CD8-positive, alpha-beta T cell (primary cell): ENCODE measurements at regions of chr14 and their contacts with region 1.

Region 1: DNA sequence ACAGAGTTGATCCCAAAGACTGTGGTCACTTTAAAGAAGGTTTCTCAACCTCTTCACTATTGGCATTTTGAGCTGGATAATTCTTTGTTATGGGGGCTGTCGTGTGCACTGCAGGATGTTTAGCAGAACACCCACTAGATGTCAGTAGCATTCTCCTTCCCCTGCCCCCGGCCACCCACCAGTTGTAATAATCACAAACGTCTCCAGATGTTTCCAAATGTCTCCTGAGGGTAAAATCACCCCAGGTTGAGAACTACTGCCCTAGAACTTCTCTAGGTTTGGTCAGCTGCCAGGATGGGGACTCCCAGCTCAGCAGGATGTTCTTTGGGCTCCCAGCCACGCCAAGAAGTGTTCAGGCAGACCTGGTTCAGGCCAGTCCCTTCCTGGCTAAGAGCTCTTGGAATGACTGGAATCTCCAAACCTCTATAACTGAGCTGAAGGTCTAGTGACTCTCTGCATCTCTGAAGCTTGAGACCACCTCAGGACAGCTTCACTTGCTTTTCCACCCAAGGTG is 12.5 kb upstream of the AJUBA start:
- DNase-seq: peak in 7 of 9 experiments; percentile 13 to 63 (median 46)
- ATAC-seq: peak; percentile 85
- H3K4me3 ChIP-seq: no peak overlapping the region
- H3K4me3 Mint-ChIP-seq: no peak overlapping the region
- H3K27ac ChIP-seq: no peak overlapping the region
- H3K27ac Mint-ChIP-seq: no peak overlapping the region
- H3K4me1 ChIP-seq: peaks cover 3% of the 10 kb centered on the region
- H3K4me1 Mint-ChIP-seq: peaks cover 5% of the 10 kb centered on the region
- H3K27me3 ChIP-seq: no peaks in the 10 kb centered on the region
- H3K27me3 Mint-ChIP-seq: no peaks in the 10 kb centered on the region
- CTCF ChIP-seq: peak; percentile 46

Region 2: GRCh38 chr14:22973217-22974032 is 21.4 kb before region 1 on chr14:
- CTCF ChIA-PET with region 1: interaction called, 207 read pairs
- POLR2A ChIA-PET with region 1: no interaction called
- intact Hi-C with region 1: no loop called
- DNase-seq: peak in 7 of 9 experiments; percentile 30 to 70 (median 45)
- ATAC-seq: peak; percentile 52
- H3K4me3 ChIP-seq: no peak overlapping the region
- H3K4me3 Mint-ChIP-seq: no peak overlapping the region
- H3K27ac ChIP-seq: no peak overlapping the region
- H3K27ac Mint-ChIP-seq: no peak overlapping the region
- H3K4me1 ChIP-seq: no peaks in the 10 kb centered on the region
- H3K4me1 Mint-ChIP-seq: no peaks in the 10 kb centered on the region
- H3K27me3 ChIP-seq: no peaks in the 10 kb centered on the region
- H3K27me3 Mint-ChIP-seq: peaks cover 2% of the 10 kb centered on the region
- CTCF ChIP-seq: peak; percentile 64

Region 3: DNA sequence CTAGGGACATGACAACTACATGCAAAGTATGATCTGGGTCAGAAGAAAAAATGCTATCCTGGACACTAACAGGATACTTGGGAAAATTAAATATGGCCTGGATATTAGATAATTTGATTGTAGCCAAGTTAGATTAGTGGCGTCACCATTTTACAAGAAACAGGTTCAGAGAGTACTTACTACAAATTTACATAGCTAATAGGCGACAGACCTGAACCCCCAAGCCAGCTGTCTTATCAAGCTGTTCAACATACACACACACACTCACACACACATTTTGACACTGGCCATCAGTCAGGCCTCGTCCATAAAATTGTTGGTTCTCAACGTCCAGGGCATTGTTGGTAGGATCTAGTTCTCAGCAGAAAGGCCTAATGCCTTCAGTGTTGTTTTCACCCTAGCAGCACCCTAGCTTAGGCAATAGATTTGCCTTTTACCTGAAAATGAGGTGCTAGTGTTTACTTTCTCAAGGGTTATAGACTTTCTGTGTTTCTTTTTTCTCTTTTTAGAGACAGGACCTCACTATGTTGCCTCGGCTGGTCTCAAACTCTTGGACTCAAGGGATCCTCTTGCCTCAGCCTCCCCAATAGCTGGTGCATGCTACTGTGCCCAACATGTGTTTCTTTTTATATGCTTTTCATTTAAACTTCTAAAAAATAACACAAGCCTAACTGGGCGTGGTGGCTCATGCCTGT is 18.4 kb after region 1 on chr14:
- CTCF ChIA-PET with region 1: interaction called, 59 read pairs
- POLR2A ChIA-PET with region 1: interaction called, 3 read pairs
- intact Hi-C with region 1: no loop called
- DNase-seq: no peak
- ATAC-seq: no peak
- H3K4me3 ChIP-seq: no peak overlapping the region
- H3K4me3 Mint-ChIP-seq: no peak overlapping the region
- H3K27ac ChIP-seq: no peak overlapping the region
- H3K27ac Mint-ChIP-seq: peak overlapping the region; percentile 64
- H3K4me1 ChIP-seq: peaks cover 13% of the 10 kb centered on the region
- H3K4me1 Mint-ChIP-seq: peaks cover 25% of the 10 kb centered on the region
- H3K27me3 ChIP-seq: no peaks in the 10 kb centered on the region
- H3K27me3 Mint-ChIP-seq: no peaks in the 10 kb centered on the region
- CTCF ChIP-seq: no peak

Region 4: GRCh38 chr14:23025151-23025814 is 30.5 kb after region 1 on chr14:
- CTCF ChIA-PET with region 1: interaction called, 39 read pairs
- POLR2A ChIA-PET with region 1: no interaction called
- intact Hi-C with region 1: no loop called
- DNase-seq: no peak
- ATAC-seq: no peak
- H3K4me3 ChIP-seq: no peak overlapping the region
- H3K4me3 Mint-ChIP-seq: no peak overlapping the region
- H3K27ac ChIP-seq: no peak overlapping the region
- H3K27ac Mint-ChIP-seq: peak overlapping the region; percentile 72
- H3K4me1 ChIP-seq: peaks cover 32% of the 10 kb centered on the region
- H3K4me1 Mint-ChIP-seq: peaks cover 66% of the 10 kb centered on the region
- H3K27me3 ChIP-seq: no peaks in the 10 kb centered on the region
- H3K27me3 Mint-ChIP-seq: no peaks in the 10 kb centered on the region
- CTCF ChIP-seq: no peak

Region 5: DNA sequence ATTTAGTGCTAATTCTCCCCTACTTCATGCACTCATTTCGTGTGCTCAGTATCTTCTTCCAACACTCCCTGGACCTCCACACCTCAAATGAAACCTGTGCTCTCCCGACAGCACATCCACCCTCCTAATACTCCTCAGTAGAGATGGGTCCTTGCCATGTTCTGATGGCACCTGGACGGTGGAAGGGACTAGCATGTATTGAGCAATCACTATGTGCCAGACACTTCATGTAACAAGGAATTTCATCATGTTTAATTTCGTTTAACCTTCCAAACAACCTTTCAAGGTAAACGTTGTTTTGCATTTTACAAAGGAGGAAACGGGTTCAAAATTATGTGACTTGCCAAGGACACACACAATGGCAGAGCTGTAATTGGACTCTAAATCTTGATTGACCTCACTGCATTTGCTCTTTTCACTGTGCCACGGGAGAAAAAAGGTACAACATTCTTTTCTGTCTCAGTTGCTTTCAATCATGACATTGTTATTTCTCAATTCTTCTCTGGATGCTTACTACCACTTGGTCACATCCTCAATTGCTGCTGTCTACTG is 200.8 kb after region 1 on chr14:
- CTCF ChIA-PET with region 1: no interaction called
- POLR2A ChIA-PET with region 1: no interaction called
- intact Hi-C with region 1: no loop called
- DNase-seq: no peak
- ATAC-seq: no peak
- H3K4me3 ChIP-seq: no peak overlapping the region
- H3K4me3 Mint-ChIP-seq: no peak overlapping the region
- H3K27ac ChIP-seq: no peak overlapping the region
- H3K27ac Mint-ChIP-seq: no peak overlapping the region
- H3K4me1 ChIP-seq: no peaks in the 10 kb centered on the region
- H3K4me1 Mint-ChIP-seq: no peaks in the 10 kb centered on the region
- H3K27me3 ChIP-seq: no peaks in the 10 kb centered on the region
- H3K27me3 Mint-ChIP-seq: peaks cover 3% of the 10 kb centered on the region
- CTCF ChIP-seq: no peak

Region 6: DNA sequence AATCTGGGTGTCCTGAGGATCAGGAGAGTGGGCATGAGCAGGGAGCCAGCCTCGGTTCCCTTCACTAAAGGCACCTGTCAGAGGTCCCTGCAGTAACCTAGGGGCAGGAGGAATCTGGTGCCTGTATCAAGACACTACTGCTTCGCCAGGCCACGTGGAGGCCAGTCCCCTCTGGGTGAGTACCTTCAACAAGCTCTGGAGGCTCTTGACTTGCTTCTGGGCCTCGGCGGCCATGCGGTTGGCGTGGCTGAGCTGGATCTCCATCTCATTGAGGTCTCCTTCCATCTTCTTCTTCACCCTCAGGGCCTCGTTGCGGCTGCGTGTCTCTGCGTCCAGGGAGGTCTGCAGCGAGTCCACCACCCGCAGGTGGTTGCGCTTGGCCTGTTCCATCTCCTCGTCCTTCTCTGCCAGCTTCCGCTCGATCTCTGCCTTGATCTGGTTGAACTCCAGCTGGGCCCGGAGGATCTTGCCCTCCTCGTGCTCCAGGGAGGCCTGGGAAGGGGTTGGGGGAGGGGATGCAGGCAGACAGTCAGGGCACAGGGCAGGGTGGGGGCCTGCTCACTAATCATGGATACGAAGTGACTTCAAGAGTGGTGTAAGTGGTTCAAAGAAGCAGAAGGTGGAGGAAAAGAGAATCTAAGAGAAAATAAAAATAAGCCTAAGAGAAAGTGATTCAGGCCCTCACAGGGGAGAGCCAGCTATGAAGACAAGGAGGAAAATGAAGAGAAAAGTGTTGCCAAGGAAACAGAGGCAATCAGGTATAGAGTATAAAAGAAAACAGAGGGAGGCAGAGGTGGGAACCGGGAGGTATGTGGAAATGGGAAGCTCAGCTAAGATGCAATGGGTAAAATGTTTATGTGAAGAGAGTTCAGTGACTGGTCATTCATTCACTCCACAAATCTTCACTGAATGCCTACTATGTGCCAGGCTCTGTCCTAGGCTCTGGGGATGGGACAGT is 421.3 kb after region 1 on chr14:
- CTCF ChIA-PET with region 1: no interaction called
- POLR2A ChIA-PET with region 1: no interaction called
- intact Hi-C with region 1: no loop called
- DNase-seq: no peak
- ATAC-seq: no peak
- H3K4me3 ChIP-seq: no peak overlapping the region
- H3K4me3 Mint-ChIP-seq: no peak overlapping the region
- H3K27ac ChIP-seq: no peak overlapping the region
- H3K27ac Mint-ChIP-seq: no peak overlapping the region
- H3K4me1 ChIP-seq: no peaks in the 10 kb centered on the region
- H3K4me1 Mint-ChIP-seq: no peaks in the 10 kb centered on the region
- H3K27me3 ChIP-seq: no peaks in the 10 kb centered on the region
- H3K27me3 Mint-ChIP-seq: peaks cover 7% of the 10 kb centered on the region
- CTCF ChIP-seq: no peak